PC-9 (cell line): ENCODE measurements at regions of chr2 and their contacts with region 1.

Region 1: GRCh38 chr2:147082850-147083522 is 761.8 kb upstream of the ACVR2A start:
- DNase-seq: peak in 1 of 2 experiments; percentile 41
- H3K4me3 ChIP-seq: no peak overlapping the region
- H3K27ac ChIP-seq: no peak overlapping the region
- H3K4me1 ChIP-seq: no peaks in the 10 kb centered on the region
- H3K27me3 ChIP-seq: no peaks in the 10 kb centered on the region
- CTCF ChIP-seq: peak; percentile 93

Region 2: GRCh38 chr2:146927080-146927711 is 155.8 kb before region 1 on chr2:
- CTCF ChIA-PET with region 1: no interaction called
- POLR2A ChIA-PET with region 1: no interaction called
- intact Hi-C with region 1: loop called (anchors 2 kb)
- DNase-seq: peak in 1 of 2 experiments; percentile 49
- H3K4me3 ChIP-seq: no peak overlapping the region
- H3K27ac ChIP-seq: no peak overlapping the region
- H3K4me1 ChIP-seq: no peaks in the 10 kb centered on the region
- H3K27me3 ChIP-seq: no peaks in the 10 kb centered on the region
- CTCF ChIP-seq: peak; percentile 61

Region 3: GRCh38 chr2:147040298-147041120 is 42.5 kb before region 1 on chr2:
- CTCF ChIA-PET with region 1: no interaction called
- POLR2A ChIA-PET with region 1: no interaction called
- intact Hi-C with region 1: no loop called
- DNase-seq: no peak
- H3K4me3 ChIP-seq: no peak overlapping the region
- H3K27ac ChIP-seq: no peak overlapping the region
- H3K4me1 ChIP-seq: no peaks in the 10 kb centered on the region
- H3K27me3 ChIP-seq: no peaks in the 10 kb centered on the region
- CTCF ChIP-seq: no peak

Region 4: GRCh38 chr2:147135376-147135775 is 52.4 kb after region 1 on chr2:
- CTCF ChIA-PET with region 1: no interaction called
- POLR2A ChIA-PET with region 1: no interaction called
- intact Hi-C with region 1: no loop called
- DNase-seq: no peak
- H3K4me3 ChIP-seq: no peak overlapping the region
- H3K27ac ChIP-seq: no peak overlapping the region
- H3K4me1 ChIP-seq: no peaks in the 10 kb centered on the region
- H3K27me3 ChIP-seq: no peaks in the 10 kb centered on the region
- CTCF ChIP-seq: no peak

Region 5: GRCh38 chr2:147165697-147166382 is 82.9 kb after region 1 on chr2:
- CTCF ChIA-PET with region 1: no interaction called
- POLR2A ChIA-PET with region 1: no interaction called
- intact Hi-C with region 1: no loop called
- DNase-seq: no peak
- H3K4me3 ChIP-seq: no peak overlapping the region
- H3K27ac ChIP-seq: no peak overlapping the region
- H3K4me1 ChIP-seq: no peaks in the 10 kb centered on the region
- H3K27me3 ChIP-seq: no peaks in the 10 kb centered on the region
- CTCF ChIP-seq: no peak

Region 6: DNA sequence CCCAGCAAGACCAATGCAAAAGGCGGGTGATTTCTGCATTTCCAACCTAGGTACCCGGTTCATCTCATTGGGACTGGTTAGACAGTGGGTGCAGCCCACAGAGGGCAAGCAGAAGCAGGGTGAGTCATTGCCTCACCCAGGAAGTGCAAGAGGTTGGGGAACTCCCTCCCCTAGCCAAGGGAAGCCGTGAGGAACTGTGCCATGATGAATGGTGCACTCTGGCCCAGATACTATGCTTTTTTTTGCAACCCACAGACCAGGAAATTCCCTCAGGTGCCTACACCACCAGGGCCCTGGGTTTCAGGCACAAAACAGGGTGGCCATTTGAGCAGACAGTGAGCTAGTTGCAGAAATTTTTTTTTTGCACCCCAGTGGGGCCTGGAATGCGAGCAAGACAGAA is 99.3 kb after region 1 on chr2:
- CTCF ChIA-PET with region 1: no interaction called
- POLR2A ChIA-PET with region 1: no interaction called
- intact Hi-C with region 1: loop called (anchors 5 kb)
- DNase-seq: peak; percentile 76
- H3K4me3 ChIP-seq: no peak overlapping the region
- H3K27ac ChIP-seq: peak overlapping the region; percentile 70
- H3K4me1 ChIP-seq: peaks cover 28% of the 10 kb centered on the region
- H3K27me3 ChIP-seq: no peaks in the 10 kb centered on the region
- CTCF ChIP-seq: no peak

Region 7: DNA sequence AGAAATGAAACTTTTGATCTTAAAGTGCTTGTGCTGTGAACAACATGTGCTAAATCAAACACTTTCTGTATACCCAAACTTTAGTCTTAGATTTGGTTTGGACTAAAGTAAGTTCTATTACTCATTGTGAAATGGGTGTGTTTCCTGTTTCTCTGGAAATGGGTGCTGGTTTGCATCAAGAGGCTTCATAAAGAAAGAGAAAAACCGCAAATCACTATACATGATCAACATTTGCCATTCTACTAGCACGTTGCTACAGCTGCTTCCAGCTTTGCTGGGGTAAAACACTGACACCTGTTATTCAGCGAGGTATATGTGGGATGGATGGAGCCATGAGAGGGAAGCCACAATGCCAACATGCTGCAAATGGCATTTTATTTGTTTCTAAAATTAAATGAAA is 214.8 kb after region 1 on chr2:
- CTCF ChIA-PET with region 1: no interaction called
- POLR2A ChIA-PET with region 1: no interaction called
- intact Hi-C with region 1: no loop called
- DNase-seq: no peak
- H3K4me3 ChIP-seq: no peak overlapping the region
- H3K27ac ChIP-seq: no peak overlapping the region
- H3K4me1 ChIP-seq: peaks cover 13% of the 10 kb centered on the region
- H3K27me3 ChIP-seq: no peaks in the 10 kb centered on the region
- CTCF ChIP-seq: no peak

Region 8: DNA sequence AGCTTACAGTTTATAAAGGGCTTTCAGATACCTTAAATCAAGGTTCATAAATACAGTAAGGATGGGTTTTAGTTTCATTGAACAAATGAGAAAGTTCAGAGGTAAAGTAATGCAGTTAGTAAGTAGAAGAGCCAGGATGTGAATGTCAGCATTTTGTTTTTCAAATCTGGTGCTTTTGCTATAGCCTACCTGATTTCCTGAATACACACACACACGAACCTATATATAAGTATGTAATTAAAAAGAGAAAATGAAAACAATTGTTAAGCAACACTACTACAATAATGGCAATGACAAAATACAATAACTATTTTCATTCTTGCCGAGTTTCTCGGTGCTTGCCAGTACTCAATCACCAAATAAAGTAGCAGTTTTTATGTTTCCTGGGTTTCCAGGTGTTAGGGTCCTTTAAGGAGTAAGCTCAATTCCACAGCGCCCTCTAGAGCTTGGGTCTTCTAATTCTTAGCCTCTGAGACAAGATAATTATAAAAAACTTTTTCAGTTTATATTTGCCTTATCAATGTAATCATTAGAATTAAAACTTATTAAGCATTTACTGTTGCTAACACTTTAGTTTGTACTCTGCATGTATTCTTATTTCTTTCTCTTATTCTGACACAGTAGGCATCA is 248.9 kb after region 1 on chr2:
- CTCF ChIA-PET with region 1: interaction called, 3 read pairs
- POLR2A ChIA-PET with region 1: no interaction called
- intact Hi-C with region 1: loop called (anchors 2 kb)
- DNase-seq: peak in 1 of 2 experiments; percentile 10
- H3K4me3 ChIP-seq: no peak overlapping the region
- H3K27ac ChIP-seq: no peak overlapping the region
- H3K4me1 ChIP-seq: no peaks in the 10 kb centered on the region
- H3K27me3 ChIP-seq: no peaks in the 10 kb centered on the region
- CTCF ChIP-seq: peak; percentile 67

Region 9: DNA sequence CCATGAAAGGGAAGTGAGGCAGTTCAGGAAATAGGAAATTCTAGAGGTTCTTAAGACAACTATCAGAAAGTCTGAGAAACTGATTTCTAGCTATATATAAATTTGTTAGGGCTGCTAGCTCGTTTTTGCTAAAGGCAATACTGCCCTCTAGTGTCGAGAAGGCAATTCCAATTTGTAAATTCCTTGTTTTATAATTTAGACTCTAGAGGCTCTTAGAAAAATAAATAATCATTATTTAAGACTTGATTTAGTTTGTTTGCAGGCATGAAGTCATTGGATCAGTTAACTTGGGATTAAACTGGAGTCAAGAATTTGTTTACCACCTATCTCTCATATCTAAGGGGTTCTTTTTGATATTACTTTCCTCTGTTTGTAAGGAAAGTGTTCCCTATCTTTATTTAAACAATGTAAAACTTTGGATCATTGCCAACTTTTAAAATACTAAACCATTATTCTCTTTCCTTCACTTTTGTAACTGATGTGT is 828.0 kb after region 1 on chr2:
- CTCF ChIA-PET with region 1: interaction called, 5 read pairs
- POLR2A ChIA-PET with region 1: no interaction called
- intact Hi-C with region 1: loop called (anchors 10 kb)
- DNase-seq: peak; percentile 15 to 40
- H3K4me3 ChIP-seq: no peak overlapping the region
- H3K27ac ChIP-seq: no peak overlapping the region
- H3K4me1 ChIP-seq: no peaks in the 10 kb centered on the region
- H3K27me3 ChIP-seq: no peaks in the 10 kb centered on the region
- CTCF ChIP-seq: peak; percentile 81